CD4-positive, alpha-beta T cell (primary cell): ENCODE measurements at regions of chr3 and their contacts with region 1.

Region 1: DNA sequence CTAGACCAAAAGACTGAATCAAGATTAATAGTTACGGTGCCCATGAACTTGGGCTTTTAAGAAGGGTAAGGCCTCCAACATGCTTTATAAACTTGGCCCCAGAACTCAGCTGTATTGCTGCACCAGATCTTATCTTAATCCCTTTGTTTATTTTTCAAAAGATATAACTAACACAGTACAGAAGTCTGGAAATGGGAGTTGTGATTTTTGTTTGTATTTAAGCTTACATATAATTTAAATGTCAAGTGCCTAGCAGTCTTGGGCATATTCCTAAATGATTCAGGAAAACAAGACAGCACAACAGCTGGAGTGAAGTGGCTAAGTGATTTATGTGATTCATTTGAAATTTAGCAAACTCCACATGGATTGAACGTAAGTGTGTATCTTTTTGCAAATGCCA is 56.2 kb downstream of the NBEAL2 start:
- DNase-seq: no peak
- ATAC-seq: no peak
- H3K4me3 ChIP-seq: no peak overlapping the region
- H3K4me3 Mint-ChIP-seq: no peak overlapping the region
- H3K27ac ChIP-seq: no peak overlapping the region
- H3K27ac Mint-ChIP-seq: peak overlapping the region; percentile 71
- H3K4me1 ChIP-seq: peaks cover 17% of the 10 kb centered on the region
- H3K4me1 Mint-ChIP-seq: peaks cover 35% of the 10 kb centered on the region
- H3K27me3 ChIP-seq: no peaks in the 10 kb centered on the region
- H3K27me3 Mint-ChIP-seq: no peaks in the 10 kb centered on the region
- CTCF ChIP-seq: no peak

Region 2: DNA sequence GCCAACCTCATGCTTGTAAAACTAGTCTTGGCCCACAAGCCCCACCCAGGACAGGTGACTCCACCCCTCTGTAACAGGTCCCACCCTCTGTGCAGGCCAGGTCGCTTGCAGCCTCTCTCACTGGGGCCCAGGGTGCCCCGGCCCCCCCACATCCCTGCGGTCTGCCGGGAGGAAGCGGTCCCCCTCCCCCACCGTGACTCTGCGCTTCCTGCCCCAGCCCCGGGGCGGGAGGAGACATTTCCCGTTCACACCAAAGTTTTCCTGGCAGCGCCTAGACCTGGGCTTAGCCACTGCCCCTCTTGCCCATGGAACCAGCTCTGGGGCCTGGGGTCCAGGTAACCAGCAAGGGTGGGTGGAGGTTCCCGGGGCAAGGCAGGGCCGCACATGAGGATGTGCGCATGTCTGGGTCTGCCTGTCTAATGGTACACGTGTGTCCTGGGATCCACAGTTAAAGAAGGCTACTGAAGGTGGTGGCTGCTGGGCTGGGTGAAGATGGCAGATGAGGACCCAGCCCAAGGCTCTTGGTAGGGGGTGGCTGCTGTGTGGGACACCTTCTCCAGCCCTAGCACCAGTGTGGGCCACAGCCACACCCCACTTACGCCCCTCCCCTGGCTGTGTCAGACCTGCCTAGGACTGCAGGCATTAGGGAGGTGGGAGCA is 47.8 kb before region 1 on chr3:
- CTCF ChIA-PET with region 1: no interaction called
- POLR2A ChIA-PET with region 1: no interaction called
- intact Hi-C with region 1: loop called in 1 of 2 experiments (anchors 10 kb)
- DNase-seq: peak; percentile 79 to 96 (median 89)
- ATAC-seq: peak; percentile 98
- H3K4me3 ChIP-seq: peak overlapping the region; percentile 53
- H3K4me3 Mint-ChIP-seq: peak overlapping the region; percentile 87
- H3K27ac ChIP-seq: peak overlapping the region; percentile 59 to 64
- H3K27ac Mint-ChIP-seq: peak overlapping the region; percentile 93
- H3K4me1 ChIP-seq: peaks cover 86% of the 10 kb centered on the region
- H3K4me1 Mint-ChIP-seq: peaks cover 68% of the 10 kb centered on the region
- H3K27me3 ChIP-seq: no peaks in the 10 kb centered on the region
- H3K27me3 Mint-ChIP-seq: no peaks in the 10 kb centered on the region
- CTCF ChIP-seq: no peak

Region 3: DNA sequence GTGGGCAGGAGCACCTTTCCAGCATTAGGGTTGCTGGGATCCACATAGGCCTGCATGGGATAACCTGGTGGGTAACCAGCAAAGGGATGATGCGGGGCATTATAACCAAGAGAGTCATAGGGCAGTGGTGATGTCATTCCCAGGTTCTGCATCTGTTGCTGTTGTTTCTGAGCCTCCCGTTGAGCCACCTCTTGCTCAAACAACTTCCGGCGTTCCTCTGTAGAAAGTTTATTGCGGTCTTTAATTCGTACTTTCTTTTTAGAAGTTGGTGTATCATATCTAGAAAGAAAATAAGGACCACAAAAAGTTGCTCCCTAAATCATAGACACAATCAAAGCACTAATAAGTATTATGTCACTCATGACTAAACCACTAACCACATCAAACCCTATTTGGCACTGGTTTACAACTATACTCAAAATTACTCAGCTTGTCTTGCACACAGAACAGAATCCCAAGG is 21.6 kb after region 1 on chr3:
- CTCF ChIA-PET with region 1: interaction called, 3 read pairs
- POLR2A ChIA-PET with region 1: interaction called, 4 read pairs
- intact Hi-C with region 1: loop called in 1 of 2 experiments (anchors 1 kb)
- DNase-seq: peak in 13 of 14 experiments; percentile 21 to 86 (median 44)
- ATAC-seq: peak; percentile 87
- H3K4me3 ChIP-seq: no peak overlapping the region
- H3K4me3 Mint-ChIP-seq: peak overlapping the region; percentile 43
- H3K27ac ChIP-seq: peak overlapping the region; percentile 18 to 49
- H3K27ac Mint-ChIP-seq: peak overlapping the region; percentile 89
- H3K4me1 ChIP-seq: peaks cover 18% of the 10 kb centered on the region
- H3K4me1 Mint-ChIP-seq: peaks cover 61% of the 10 kb centered on the region
- H3K27me3 ChIP-seq: no peaks in the 10 kb centered on the region
- H3K27me3 Mint-ChIP-seq: no peaks in the 10 kb centered on the region
- CTCF ChIP-seq: no peak

Region 4: DNA sequence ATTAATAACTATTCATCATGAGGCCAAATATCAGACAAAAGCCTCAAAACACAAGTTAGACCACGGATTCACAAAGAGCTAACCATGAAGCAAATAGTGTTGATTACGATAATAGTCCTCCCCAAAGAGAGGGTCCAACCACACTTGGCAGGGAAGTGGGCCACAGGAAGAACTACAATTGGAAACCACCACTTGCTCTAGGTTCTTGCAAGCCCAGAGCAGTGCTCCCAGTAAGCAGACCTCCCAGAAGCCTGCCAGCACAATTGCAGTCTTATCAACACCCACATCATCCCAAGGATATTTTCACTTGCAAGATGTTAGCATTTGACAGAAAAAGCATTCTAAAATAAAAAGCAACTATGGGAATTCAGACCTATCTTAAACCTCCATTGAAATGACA is 116.9 kb after region 1 on chr3:
- CTCF ChIA-PET with region 1: no interaction called
- POLR2A ChIA-PET with region 1: no interaction called
- intact Hi-C with region 1: no loop called
- DNase-seq: no peak
- ATAC-seq: no peak
- H3K4me3 ChIP-seq: no peak overlapping the region
- H3K4me3 Mint-ChIP-seq: no peak overlapping the region
- H3K27ac ChIP-seq: no peak overlapping the region
- H3K27ac Mint-ChIP-seq: peak overlapping the region; percentile 68
- H3K4me1 ChIP-seq: peaks cover 42% of the 10 kb centered on the region
- H3K4me1 Mint-ChIP-seq: peaks cover 76% of the 10 kb centered on the region
- H3K27me3 ChIP-seq: no peaks in the 10 kb centered on the region
- H3K27me3 Mint-ChIP-seq: no peaks in the 10 kb centered on the region
- CTCF ChIP-seq: no peak